ENCODE measurements at regions of chr22 and their contacts with region 1.

Region 1: DNA sequence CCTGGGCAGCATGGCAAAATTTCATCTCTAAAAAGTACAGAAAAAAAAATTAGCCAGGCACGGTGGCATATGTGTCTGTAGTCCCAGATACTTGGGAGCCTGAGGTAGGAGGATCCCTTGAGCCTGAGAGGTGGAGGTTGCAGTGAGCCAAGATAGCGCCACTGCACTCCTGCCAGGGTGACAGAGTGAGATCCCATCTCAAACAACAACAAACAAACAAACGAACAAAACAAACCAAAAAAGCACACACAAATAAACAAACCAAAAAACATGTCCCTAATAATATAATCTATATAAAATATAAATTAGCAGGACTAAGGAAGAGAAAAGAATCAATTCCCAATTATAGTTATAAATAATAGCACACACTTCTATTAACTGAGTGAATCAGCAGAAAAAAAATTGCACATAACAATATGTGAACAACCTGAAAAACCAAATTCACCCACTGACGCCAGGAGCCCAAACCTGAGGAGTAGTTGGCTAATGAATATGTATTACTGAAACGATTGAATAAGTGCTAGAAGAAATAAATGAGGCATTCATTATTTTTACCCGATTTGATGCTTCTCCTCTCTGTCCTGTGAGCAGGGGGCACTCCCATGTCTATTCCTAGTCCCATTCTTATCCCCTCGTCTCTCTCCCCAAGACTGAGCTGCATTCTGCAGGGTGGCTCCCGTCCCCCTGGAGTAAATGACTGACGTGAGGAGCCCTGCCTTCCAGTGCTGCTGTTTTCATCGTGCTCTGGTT is 108.2 kb upstream of the TOP3B start:
- DNase-seq: no peak
- H3K4me3 ChIP-seq: no peak overlapping the region
- H3K27ac ChIP-seq: no peak overlapping the region
- H3K4me1 ChIP-seq: no peaks in the 10 kb centered on the region
- H3K27me3 ChIP-seq: peaks cover 27% of the 10 kb centered on the region
- CTCF ChIP-seq: no peak

Region 2: DNA sequence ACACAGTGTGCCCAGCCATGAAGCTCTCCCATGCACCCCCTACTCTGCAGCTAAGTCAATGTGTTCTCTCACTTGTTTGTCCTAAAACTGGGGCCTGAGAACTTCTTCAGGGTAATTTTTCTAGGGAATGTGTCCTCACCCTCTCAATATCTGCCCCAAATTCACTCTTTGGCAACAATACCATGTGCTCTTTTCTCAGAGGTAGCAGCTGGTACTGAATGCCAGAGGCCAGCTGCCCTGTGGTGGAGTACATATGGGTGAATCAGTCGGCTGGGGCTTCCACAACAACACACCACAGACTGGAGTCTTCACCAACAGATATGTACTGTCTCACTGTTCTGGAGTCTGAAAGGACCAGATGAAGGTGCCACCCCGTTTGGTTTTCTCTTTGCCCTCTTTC is 10.6 kb before region 1 on chr22:
- CTCF ChIA-PET with region 1: interaction called, 12 read pairs
- POLR2A ChIA-PET with region 1: no interaction called
- intact Hi-C with region 1: no loop called
- DNase-seq: no peak
- H3K4me3 ChIP-seq: no peak overlapping the region
- H3K27ac ChIP-seq: no peak overlapping the region
- H3K4me1 ChIP-seq: no peaks in the 10 kb centered on the region
- H3K27me3 ChIP-seq: no peaks in the 10 kb centered on the region
- CTCF ChIP-seq: no peak